ENCODE measurements at regions of chr10 and their contacts with region 1.

Region 1: DNA sequence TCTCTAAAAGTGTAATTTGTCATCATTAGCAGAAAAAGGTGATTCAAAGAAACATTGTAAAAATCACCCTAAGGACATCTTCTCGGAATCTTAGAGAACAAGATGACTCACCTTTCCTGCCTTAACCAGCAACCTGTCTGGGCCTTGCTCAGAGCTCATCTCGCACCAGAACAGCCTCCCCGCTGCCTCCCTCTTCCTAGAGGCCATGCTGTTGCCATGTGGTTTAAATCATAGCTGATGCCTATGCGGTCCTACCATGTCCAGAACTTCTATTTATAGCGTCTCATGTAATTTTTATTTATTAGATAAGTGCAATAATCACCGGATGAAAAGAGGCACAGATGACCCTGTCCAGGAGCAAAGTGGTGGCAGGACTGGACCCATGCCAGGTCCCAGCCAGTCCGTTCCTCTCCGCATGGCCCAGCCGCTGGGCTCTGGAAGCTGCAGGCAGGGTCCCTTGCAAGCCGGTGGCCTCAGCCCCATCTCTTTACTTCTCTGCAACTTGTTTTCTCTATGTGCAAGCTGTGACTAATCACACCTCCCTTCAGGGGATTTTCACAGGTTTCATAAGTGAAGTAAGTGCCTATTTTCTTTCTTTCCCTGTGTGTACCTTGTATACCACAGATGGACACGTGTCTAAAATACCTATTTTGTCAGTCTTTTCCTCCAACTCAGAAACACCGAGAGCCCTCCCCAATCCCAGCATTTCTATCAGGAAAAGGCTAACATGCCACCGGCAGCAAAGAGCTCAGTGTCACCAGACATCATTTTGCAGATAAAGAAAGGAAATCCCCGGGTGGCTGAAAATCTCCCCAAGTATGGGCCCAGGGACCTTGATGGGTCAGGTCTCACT is 27.1 kb downstream of the KLF6 start:
- DNase-seq: no peak

Region 2: GRCh38 chr10:3623746-3624145 is 134.1 kb before region 1 on chr10:
- intact Hi-C with region 1: loop called (anchors 5 kb)
- DNase-seq: no peak

Region 3: DNA sequence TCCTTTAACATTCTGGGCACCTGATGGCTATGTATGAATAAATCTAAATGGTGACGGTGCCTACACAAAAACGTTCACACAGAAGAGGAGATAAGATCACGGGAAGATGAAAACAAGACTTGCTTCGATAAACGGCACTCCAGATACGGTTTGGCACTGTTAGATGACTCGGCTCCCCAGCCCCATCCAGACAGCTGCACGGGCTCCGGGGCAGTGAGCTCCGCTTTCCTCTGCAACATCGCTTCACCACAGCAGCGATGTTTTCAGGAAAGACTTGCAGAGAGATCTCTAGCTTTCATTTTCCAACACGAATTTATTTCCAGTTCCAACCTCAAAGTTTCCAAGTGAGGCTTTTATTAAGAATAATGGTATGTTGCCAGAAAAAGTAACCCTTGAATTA is 105.0 kb before region 1 on chr10:
- intact Hi-C with region 1: no loop called
- DNase-seq: no peak

Region 4: GRCh38 chr10:4046030-4046429 is 288.2 kb after region 1 on chr10:
- intact Hi-C with region 1: no loop called
- DNase-seq: no peak